AG04450 (cell line): ENCODE measurements at regions of chr1 and their contacts with region 1.

Region 1: GRCh38 chr1:171245458-171246064 is 2.7 kb upstream of the FMO1 start:
- DNase-seq: no peak
- H3K4me3 ChIP-seq: no peak overlapping the region
- H3K27ac ChIP-seq: no peak overlapping the region
- H3K27me3 ChIP-seq: no peaks in the 10 kb centered on the region
- CTCF ChIP-seq: peak; percentile 82

Region 2: DNA sequence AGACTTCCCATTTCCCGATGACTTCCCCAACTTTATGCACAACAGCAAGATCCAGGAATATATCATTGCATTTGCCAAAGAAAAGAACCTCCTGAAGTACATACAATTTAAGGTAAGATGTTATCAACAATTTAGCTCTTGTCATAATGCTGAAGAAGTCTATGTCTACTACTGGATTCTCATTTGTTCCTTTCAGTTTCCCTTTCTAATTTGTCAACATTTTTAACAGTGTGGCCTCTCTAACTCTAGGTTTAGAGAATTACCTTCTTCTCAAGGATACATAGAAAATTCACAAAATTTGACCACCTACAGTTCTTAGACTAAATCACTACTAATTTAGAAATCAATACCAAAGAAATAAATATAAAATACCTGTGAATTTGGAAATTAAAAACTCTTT is 141.7 kb before region 1 on chr1:
- CTCF ChIA-PET with region 1: no interaction called
- POLR2A ChIA-PET with region 1: no interaction called
- DNase-seq: no peak
- H3K4me3 ChIP-seq: no peak overlapping the region
- H3K27ac ChIP-seq: no peak overlapping the region
- H3K27me3 ChIP-seq: no peaks in the 10 kb centered on the region
- CTCF ChIP-seq: no peak

Region 3: GRCh38 chr1:171233190-171233589 is 12.4 kb before region 1 on chr1:
- CTCF ChIA-PET with region 1: interaction called, 20 read pairs
- POLR2A ChIA-PET with region 1: no interaction called
- DNase-seq: no peak
- H3K4me3 ChIP-seq: no peak overlapping the region
- H3K27ac ChIP-seq: no peak overlapping the region
- H3K27me3 ChIP-seq: no peaks in the 10 kb centered on the region
- CTCF ChIP-seq: no peak

Region 4: GRCh38 chr1:171344473-171344820 is 98.9 kb after region 1 on chr1:
- CTCF ChIA-PET with region 1: no interaction called
- POLR2A ChIA-PET with region 1: no interaction called
- DNase-seq: no peak
- H3K4me3 ChIP-seq: no peak overlapping the region
- H3K27ac ChIP-seq: no peak overlapping the region
- H3K27me3 ChIP-seq: no peaks in the 10 kb centered on the region
- CTCF ChIP-seq: no peak

Region 5: DNA sequence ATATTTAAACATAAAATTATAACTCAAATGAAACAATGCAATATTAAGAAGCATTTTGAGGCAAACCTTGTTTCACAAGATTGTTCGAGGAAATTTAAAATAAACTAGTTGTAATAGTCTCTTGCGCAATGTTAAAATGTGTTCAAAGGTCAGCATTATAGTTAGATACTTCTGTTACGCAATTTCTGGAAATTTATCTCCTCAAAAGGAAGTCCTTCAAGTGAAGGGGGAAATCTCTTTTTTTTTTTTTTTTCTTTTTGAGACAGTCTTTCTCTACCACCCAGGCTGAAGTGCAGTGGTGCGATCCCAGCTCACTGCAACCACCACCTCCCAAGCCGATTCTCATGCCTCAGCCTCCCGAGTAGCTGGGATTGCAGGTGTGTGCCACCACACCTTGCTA is 120.5 kb after region 1 on chr1:
- CTCF ChIA-PET with region 1: no interaction called
- POLR2A ChIA-PET with region 1: no interaction called
- DNase-seq: no peak
- H3K4me3 ChIP-seq: no peak overlapping the region
- H3K27ac ChIP-seq: no peak overlapping the region
- H3K27me3 ChIP-seq: no peaks in the 10 kb centered on the region
- CTCF ChIP-seq: no peak